Activated CD4-positive, alpha-beta T cell treated with anti-CD3 and anti-CD28 coated beads for 36 hours (primary cell): ENCODE measurements at regions of chr18 and their contacts with region 1.

Region 1: DNA sequence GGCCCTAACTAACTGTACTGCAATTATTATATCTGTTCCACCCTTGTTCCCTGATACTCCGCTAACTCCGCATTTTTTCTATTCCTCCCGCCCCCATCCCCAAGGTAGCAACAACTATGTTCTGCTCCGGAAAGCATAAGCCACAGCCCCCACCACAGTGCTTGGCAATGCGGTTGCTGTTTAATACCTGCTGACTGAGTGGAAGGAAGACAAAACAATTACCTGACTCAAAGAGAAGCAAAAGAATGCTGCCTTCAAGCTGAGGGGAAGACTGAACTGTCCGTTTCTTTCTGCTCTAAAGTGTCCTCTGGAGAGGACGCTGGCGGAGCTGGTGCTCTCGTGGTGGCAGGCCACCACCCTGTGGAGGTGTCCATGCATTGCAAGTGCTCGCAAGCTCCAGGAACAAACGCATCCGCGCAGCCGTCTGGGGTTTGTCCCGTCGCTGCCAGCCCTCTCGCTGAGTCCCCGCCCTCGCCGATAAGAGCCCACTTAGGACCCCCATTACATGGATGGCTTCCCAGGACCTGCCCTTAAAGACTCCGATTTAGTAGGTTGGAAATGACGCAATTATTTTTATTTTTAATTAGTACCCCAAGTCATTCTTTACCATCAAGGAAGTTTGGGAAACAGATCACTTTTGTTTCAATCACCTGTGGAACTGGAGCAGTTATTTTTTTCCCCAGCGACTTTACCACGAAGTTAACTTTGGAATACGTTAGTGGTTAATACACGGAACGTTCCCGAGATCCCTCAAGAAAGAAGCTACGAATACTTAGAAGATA is 1.6 kb upstream of the MYL12A start:
- DNase-seq: peak; percentile 92
- ATAC-seq: peak; percentile 55
- H3K4me3 Mint-ChIP-seq: peak overlapping the region; percentile 76
- H3K27ac Mint-ChIP-seq: peak overlapping the region; percentile 97
- H3K4me1 Mint-ChIP-seq: peaks cover 26% of the 10 kb centered on the region
- H3K27me3 Mint-ChIP-seq: no peaks in the 10 kb centered on the region

Region 2: GRCh38 chr18:2655178-2655953 is 590.7 kb before region 1 on chr18 and contains the start of gene SMCHD1:
- CTCF ChIA-PET with region 1: no interaction called
- POLR2A ChIA-PET with region 1: no interaction called
- intact Hi-C with region 1: loop called (anchors 1 to 5 kb)
- DNase-seq: peak; percentile 97
- ATAC-seq: peak; percentile 78
- H3K4me3 Mint-ChIP-seq: peak within 1 kb of the TSS; percentile 95
- H3K27ac Mint-ChIP-seq: peak within 1 kb of the TSS; percentile 96
- H3K4me1 Mint-ChIP-seq: peaks cover 31% of the 10 kb centered on the region
- H3K27me3 Mint-ChIP-seq: no peaks in the 10 kb centered on the region
- total RNA-seq, gene SMCHD1: 89.5 to 121 TPM

Region 3: GRCh38 chr18:2932247-2933181 is 313.5 kb before region 1 on chr18:
- CTCF ChIA-PET with region 1: interaction called, 27 read pairs
- POLR2A ChIA-PET with region 1: no interaction called
- intact Hi-C with region 1: loop called (anchors 1 kb)
- DNase-seq: peak; percentile 50
- ATAC-seq: peak; percentile 60
- H3K4me3 Mint-ChIP-seq: no peak overlapping the region
- H3K27ac Mint-ChIP-seq: peak overlapping the region; percentile 81
- H3K4me1 Mint-ChIP-seq: peaks cover 41% of the 10 kb centered on the region
- H3K27me3 Mint-ChIP-seq: no peaks in the 10 kb centered on the region

Region 4: DNA sequence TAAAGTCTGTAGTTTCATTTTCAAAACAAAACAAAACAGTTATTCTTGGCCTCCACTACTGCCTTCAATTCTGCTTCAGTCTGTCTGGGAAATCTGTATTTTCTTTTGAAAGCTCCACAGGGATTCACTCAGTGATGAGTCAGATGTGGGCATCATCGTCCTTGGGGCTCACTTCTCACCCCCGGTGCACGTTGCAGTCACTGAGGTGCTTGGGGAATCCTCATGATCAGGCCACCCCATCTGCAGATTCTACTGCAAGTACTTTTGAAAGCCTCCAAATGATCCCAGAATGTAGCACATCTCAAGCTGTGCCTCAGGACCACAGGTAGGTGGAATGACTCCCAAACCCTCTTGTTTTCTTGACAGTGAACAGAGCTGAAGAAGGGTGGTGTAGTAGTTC is 267.4 kb before region 1 on chr18:
- CTCF ChIA-PET with region 1: interaction called, 3 read pairs
- POLR2A ChIA-PET with region 1: no interaction called
- intact Hi-C with region 1: loop called (anchors 1 to 2 kb)
- DNase-seq: peak; percentile 72
- ATAC-seq: peak; percentile 27
- H3K4me3 Mint-ChIP-seq: peak overlapping the region; percentile 74
- H3K27ac Mint-ChIP-seq: peak overlapping the region; percentile 98
- H3K4me1 Mint-ChIP-seq: peaks cover 83% of the 10 kb centered on the region
- H3K27me3 Mint-ChIP-seq: no peaks in the 10 kb centered on the region

Region 5: DNA sequence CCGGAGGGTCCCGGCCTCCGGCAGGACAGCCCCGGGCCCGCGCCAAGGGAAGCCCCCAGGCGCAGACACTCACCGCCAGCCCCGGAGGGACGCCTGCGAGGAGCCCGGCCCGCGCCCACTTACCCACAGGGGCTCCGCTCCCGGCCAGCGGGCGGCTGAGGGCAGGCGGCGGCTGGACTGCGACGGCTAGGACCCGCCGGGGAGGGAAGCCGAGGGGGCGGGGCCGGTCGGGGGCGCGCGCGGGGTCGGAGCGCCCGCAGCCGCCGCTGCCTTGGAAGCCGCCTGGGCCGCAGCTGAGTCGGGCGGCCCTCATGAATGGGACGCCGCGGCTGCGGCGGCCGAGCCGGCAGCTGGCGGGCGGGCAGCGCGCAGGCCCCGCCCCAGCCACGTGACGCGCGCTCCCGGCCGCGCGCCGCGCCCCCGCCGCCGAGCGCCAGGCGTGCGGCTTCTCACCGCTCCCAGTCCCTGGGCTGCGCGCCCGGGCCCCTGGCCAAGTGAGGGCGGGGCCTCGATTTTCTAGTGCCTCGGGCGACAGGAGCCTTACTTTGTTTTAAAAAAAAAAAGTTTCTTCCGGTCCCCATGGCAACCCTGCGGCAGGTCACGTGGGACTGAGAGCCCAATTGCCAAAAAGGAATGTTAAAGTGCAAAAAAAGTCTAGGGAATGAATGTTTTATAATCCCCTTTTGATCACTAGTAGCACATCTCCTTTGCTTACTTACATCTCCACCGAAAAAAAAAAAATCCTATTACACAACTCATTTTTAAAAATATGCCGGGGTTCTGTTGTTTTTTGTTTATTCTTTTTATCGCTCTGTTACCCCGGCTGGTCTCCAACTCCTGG is 232.9 kb before region 1 on chr18 and contains the start of gene LPIN2:
- CTCF ChIA-PET with region 1: interaction called, 4 read pairs
- POLR2A ChIA-PET with region 1: no interaction called
- intact Hi-C with region 1: loop called (anchors 1 to 2 kb)
- DNase-seq: peak; percentile 98
- ATAC-seq: peak; percentile 96
- H3K4me3 Mint-ChIP-seq: peak within 1 kb of the TSS; percentile 95
- H3K27ac Mint-ChIP-seq: peak within 1 kb of the TSS; percentile 94
- H3K4me1 Mint-ChIP-seq: peaks cover 66% of the 10 kb centered on the region
- H3K27me3 Mint-ChIP-seq: no peaks in the 10 kb centered on the region
- total RNA-seq, gene LPIN2: 82.6 to 95.3 TPM

Region 6: DNA sequence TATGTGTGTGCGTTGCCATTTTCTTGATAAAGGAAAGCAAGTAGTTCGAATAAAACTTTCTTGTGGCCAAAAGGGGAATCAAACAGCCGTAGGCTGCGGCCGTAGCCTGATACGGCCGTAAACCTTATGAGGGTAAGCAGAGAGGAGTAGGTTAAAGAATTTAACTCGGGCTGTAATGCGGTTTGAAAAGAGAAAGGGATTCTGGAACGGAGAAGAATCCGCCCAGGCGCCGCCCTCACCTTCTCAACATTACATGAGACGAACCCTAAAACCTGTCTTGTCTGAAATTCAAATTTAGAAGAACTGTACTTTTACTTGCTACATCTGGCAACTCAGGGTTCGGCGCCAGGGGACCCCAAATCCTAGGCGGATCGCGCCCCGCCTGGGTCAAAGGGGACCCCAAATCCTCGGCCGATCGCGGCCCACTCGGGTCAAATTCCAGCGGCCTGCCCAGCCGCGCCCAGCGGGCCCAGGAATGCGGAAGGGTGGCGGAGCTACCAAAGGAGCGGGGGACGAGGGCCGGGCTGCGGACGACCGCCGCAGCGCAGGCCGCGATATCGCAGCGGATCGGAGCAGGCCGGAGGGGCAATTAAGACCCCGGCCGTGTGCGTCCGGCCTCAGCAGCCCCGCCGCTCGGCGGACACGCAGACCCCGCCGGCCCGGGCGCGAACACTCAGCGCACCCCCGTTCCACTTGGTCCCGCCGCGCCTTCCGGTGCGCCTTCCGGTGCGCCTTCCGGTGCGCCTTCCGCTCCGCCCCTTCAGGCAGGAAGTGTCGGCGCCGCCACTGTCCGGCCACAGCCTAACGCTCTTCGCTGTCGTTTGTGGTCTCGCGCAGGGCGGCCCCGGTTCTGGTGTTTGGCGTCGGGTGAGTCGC is 15.6 kb after region 1 on chr18 and contains the start of gene MYL12B:
- CTCF ChIA-PET with region 1: interaction called, 22 read pairs
- POLR2A ChIA-PET with region 1: interaction called, 8 read pairs
- intact Hi-C with region 1: loop called (anchors 1 kb)
- DNase-seq: peak; percentile 88
- ATAC-seq: peak; percentile 77
- H3K4me3 Mint-ChIP-seq: peak within 1 kb of the TSS; percentile 88
- H3K27ac Mint-ChIP-seq: peak within 1 kb of the TSS; percentile 96
- H3K4me1 Mint-ChIP-seq: peaks cover 59% of the 10 kb centered on the region
- H3K27me3 Mint-ChIP-seq: no peaks in the 10 kb centered on the region
- total RNA-seq, gene MYL12B: 282 to 301 TPM